K562 (cell line): ENCODE measurements at regions of chr12 and their contacts with region 1.

Region 1: GRCh38 chr12:46342562-46343033 is 30.0 kb downstream of the SLC38A2 start:
- DNase-seq: peak in 1 of 4 experiments; percentile 33
- ATAC-seq: peak; percentile 89
- H3K4me3 ChIP-seq: no peak overlapping the region
- H3K27ac ChIP-seq: no peak overlapping the region
- H3K4me1 ChIP-seq: no peaks in the 10 kb centered on the region
- H3K27me3 ChIP-seq: peaks cover 0 to 3% of the 10 kb centered on the region in 2 experiments; a peak in 1 of 5 replicates
- CTCF ChIP-seq: peak; percentile 52 to 61 (median 52); a peak in 3 of 6 replicates
- EP300 ChIP-seq: no peak
- POLR2A ChIP-seq: no peak
- RAD21 ChIP-seq: peak; percentile 62 to 92

Region 2: GRCh38 chr12:46675736-46676135 is 333.1 kb after region 1 on chr12:
- CTCF ChIA-PET with region 1: no interaction called
- POLR2A ChIA-PET with region 1: no interaction called
- in situ Hi-C with region 1: no loop called
- intact Hi-C with region 1: loop called (anchors 5 kb)
- DNase-seq: peak in 3 of 4 experiments; percentile 17 to 46 (median 26)
- ATAC-seq: peak; percentile 59
- H3K4me3 ChIP-seq: no peak overlapping the region
- H3K27ac ChIP-seq: no peak overlapping the region
- H3K4me1 ChIP-seq: no peaks in the 10 kb centered on the region; a peak in 1 of 5 replicates
- H3K27me3 ChIP-seq: no peaks in the 10 kb centered on the region
- CTCF ChIP-seq: peak; percentile 36 to 60 (median 45); a peak in 4 of 6 replicates
- EP300 ChIP-seq: no peak
- POLR2A ChIP-seq: no peak
- RAD21 ChIP-seq: peak; percentile 32 to 48